Aorta (tissue), 5 donors: ENCODE measurements at regions of chr15 and their contacts with region 1.

Region 1: DNA sequence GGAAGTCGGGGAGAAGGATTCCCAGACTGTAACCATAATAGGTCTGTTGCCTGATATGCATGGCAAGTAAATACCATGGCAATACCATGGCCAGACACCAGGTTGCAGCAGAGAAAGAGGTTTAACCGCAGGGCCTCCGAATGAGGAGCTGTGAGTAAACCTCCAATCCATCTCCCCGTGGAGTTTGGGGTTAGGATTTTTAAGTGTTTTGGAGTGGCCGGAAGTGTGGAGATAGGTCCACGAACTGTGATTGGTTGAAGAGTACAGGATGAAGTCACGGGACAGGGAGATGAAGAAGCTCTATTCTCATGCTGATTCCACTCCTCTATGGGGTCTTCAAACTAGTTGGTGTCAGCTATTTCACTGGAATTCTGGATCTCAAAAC is 127.9 kb downstream of the ST8SIA2 start:
- DNase-seq: peak; percentile 83 to 86
- ATAC-seq: peak; percentile 93
- H3K4me3 ChIP-seq: no peak overlapping the region
- H3K27ac ChIP-seq: no peak overlapping the region
- H3K4me1 ChIP-seq: no peaks in the 10 kb centered on the region
- H3K27me3 ChIP-seq: peaks cover 0 to 2% of the 10 kb centered on the region in 2 donors

Region 2: GRCh38 chr15:92603743-92604470 is 82.3 kb after region 1 on chr15:
- intact Hi-C with region 1: loop called in 1 of 2 experiments (anchors 5 kb)
- DNase-seq: no peak
- ATAC-seq: no peak
- H3K4me3 ChIP-seq: no peak overlapping the region
- H3K27ac ChIP-seq: no peak overlapping the region
- H3K4me1 ChIP-seq: no peaks in the 10 kb centered on the region
- H3K27me3 ChIP-seq: no peaks in the 10 kb centered on the region

Region 3: GRCh38 chr15:92683232-92683834 is 161.7 kb after region 1 on chr15:
- intact Hi-C with region 1: loop called (anchors 2 to 10 kb)
- DNase-seq: no peak
- ATAC-seq: no peak
- H3K4me3 ChIP-seq: no peak overlapping the region
- H3K27ac ChIP-seq: no peak overlapping the region
- H3K4me1 ChIP-seq: no peaks in the 10 kb centered on the region
- H3K27me3 ChIP-seq: no peaks in the 10 kb centered on the region